CD4-positive, alpha-beta T cell (primary cell): ENCODE measurements at regions of chr19 and their contacts with region 1.

Region 1: GRCh38 chr19:53365134-53365898 is at the start of gene ZNF525:
- DNase-seq: peak; percentile 95 to 99 (median 97)
- ATAC-seq: peak; percentile 99
- H3K4me3 ChIP-seq: peak within 1 kb of the TSS; percentile 74
- H3K4me3 Mint-ChIP-seq: peak within 1 kb of the TSS; percentile 96
- H3K27ac ChIP-seq: peak within 1 kb of the TSS; percentile 74 to 77
- H3K27ac Mint-ChIP-seq: peak within 1 kb of the TSS; percentile 91
- H3K4me1 ChIP-seq: peaks cover 19% of the 10 kb centered on the region
- H3K4me1 Mint-ChIP-seq: peaks cover 32% of the 10 kb centered on the region
- H3K27me3 ChIP-seq: no peaks in the 10 kb centered on the region
- H3K27me3 Mint-ChIP-seq: no peaks in the 10 kb centered on the region
- CTCF ChIP-seq: peak; percentile 55
- total RNA-seq, gene ZNF525: 13.5 to 16.3 TPM

Region 2: GRCh38 chr19:53158119-53158656 is 207.1 kb before region 1 on chr19:
- CTCF ChIA-PET with region 1: no interaction called
- POLR2A ChIA-PET with region 1: no interaction called
- intact Hi-C with region 1: loop called in 1 of 2 experiments (anchors 2 kb)
- DNase-seq: peak in 13 of 14 experiments; percentile 1 to 66 (median 9)
- ATAC-seq: peak; percentile 33
- H3K4me3 ChIP-seq: peak overlapping the region; percentile 71
- H3K4me3 Mint-ChIP-seq: peak overlapping the region; percentile 92
- H3K27ac ChIP-seq: peak overlapping the region; percentile 44 to 56
- H3K27ac Mint-ChIP-seq: peak overlapping the region; percentile 82
- H3K4me1 ChIP-seq: peaks cover 19% of the 10 kb centered on the region
- H3K4me1 Mint-ChIP-seq: peaks cover 26% of the 10 kb centered on the region
- H3K27me3 ChIP-seq: peaks cover 0 to 3% of the 10 kb centered on the region in 2 experiments
- H3K27me3 Mint-ChIP-seq: no peaks in the 10 kb centered on the region
- CTCF ChIP-seq: no peak

Region 3: GRCh38 chr19:53254411-53255341 is 110.6 kb before region 1 on chr19 and contains the start of gene ZNF677:
- CTCF ChIA-PET with region 1: no interaction called
- POLR2A ChIA-PET with region 1: no interaction called
- intact Hi-C with region 1: loop called in 1 of 2 experiments (anchors 10 kb)
- DNase-seq: peak; percentile 60 to 90 (median 78)
- ATAC-seq: peak; percentile 98
- H3K4me3 ChIP-seq: peak within 1 kb of the TSS; percentile 85
- H3K4me3 Mint-ChIP-seq: peak within 1 kb of the TSS; percentile 83
- H3K27ac ChIP-seq: peak within 1 kb of the TSS in 1 of 2 donors; percentile 29
- H3K27ac Mint-ChIP-seq: peak within 1 kb of the TSS; percentile 4
- H3K4me1 ChIP-seq: peaks cover 12% of the 10 kb centered on the region
- H3K4me1 Mint-ChIP-seq: peaks cover 7% of the 10 kb centered on the region
- H3K27me3 ChIP-seq: no peaks in the 10 kb centered on the region
- H3K27me3 Mint-ChIP-seq: peaks cover 3% of the 10 kb centered on the region
- CTCF ChIP-seq: no peak
- total RNA-seq, gene ZNF677: 5.2 to 6.4 TPM

Region 4: GRCh38 chr19:53333463-53334449 is 31.6 kb before region 1 on chr19 and contains the start of gene ZNF845:
- CTCF ChIA-PET with region 1: no interaction called
- POLR2A ChIA-PET with region 1: interaction called, 5 read pairs
- intact Hi-C with region 1: loop called (anchors 1 to 5 kb)
- DNase-seq: peak; percentile 91 to 99 (median 95)
- ATAC-seq: peak; percentile 97
- H3K4me3 ChIP-seq: peak within 1 kb of the TSS; percentile 82
- H3K4me3 Mint-ChIP-seq: peak within 1 kb of the TSS; percentile 95
- H3K27ac ChIP-seq: peak within 1 kb of the TSS in 1 of 2 donors; percentile 72
- H3K27ac Mint-ChIP-seq: peak within 1 kb of the TSS; percentile 84
- H3K4me1 ChIP-seq: peaks cover 17% of the 10 kb centered on the region
- H3K4me1 Mint-ChIP-seq: peaks cover 22% of the 10 kb centered on the region
- H3K27me3 ChIP-seq: peaks cover 0 to 4% of the 10 kb centered on the region in 2 experiments
- H3K27me3 Mint-ChIP-seq: peaks cover 8% of the 10 kb centered on the region
- CTCF ChIP-seq: no peak
- total RNA-seq, gene ZNF845: 7.5 to 8.0 TPM

Region 5: DNA sequence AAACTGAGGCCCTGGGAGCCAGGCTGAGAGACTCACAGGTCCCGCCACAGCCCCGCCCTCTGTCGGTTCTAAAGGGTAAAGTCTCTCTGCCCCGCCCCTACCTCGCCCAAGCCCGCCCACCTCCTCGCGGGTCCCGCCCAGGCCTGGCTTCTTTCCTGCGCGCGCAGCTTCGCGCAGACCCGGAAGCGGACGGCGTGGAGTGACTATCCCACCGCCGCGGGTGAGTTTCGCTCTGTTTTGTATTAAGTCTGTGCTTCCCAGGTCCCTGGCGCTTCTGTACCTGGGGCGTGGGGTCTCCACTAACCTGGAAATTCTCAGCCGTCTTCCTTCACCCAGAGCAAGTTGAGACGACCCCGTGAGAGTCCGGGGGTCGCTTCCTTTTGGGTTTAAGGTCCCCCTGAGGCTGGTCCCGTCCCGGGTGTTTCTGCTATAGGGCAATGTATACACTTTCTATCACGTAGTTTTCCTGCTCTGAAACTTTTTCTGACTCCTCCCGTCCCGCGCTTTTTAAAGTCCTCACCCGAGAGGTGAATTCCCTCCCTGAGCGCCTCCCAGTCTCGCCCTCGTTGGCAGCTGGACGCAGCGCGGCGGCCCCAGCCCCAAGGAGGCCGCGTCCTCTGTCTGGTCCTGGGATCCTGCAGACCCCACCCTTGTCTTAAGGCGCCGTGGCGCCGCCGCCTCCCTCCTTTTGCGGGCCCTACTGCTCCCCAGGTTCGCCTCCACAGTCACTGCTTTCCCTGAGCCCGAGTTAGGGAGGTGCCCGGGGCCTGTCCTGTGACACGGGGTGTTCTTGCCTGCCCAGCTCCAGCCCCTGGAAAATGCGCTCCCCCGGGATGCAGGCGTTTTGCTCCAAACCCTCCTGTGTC is 29.9 kb after region 1 on chr19 and contains the start of gene ZNF765:
- CTCF ChIA-PET with region 1: no interaction called
- POLR2A ChIA-PET with region 1: interaction called, 3 read pairs
- intact Hi-C with region 1: loop called (anchors 1 to 2 kb)
- DNase-seq: peak; percentile 93 to 99 (median 96)
- ATAC-seq: peak; percentile 97
- H3K4me3 ChIP-seq: peak within 1 kb of the TSS; percentile 77
- H3K4me3 Mint-ChIP-seq: peak within 1 kb of the TSS; percentile 93
- H3K27ac ChIP-seq: peak within 1 kb of the TSS; percentile 35 to 65
- H3K27ac Mint-ChIP-seq: peak within 1 kb of the TSS; percentile 93
- H3K4me1 ChIP-seq: peaks cover 13% of the 10 kb centered on the region
- H3K4me1 Mint-ChIP-seq: peaks cover 33% of the 10 kb centered on the region
- H3K27me3 ChIP-seq: no peaks in the 10 kb centered on the region
- H3K27me3 Mint-ChIP-seq: no peaks in the 10 kb centered on the region
- CTCF ChIP-seq: peak; percentile 56
- total RNA-seq, gene ZNF765: 6.7 to 9.0 TPM

Region 6: GRCh38 chr19:53467485-53468262 is 102.4 kb after region 1 on chr19 and contains the start of gene ZNF813:
- CTCF ChIA-PET with region 1: no interaction called
- POLR2A ChIA-PET with region 1: no interaction called
- intact Hi-C with region 1: loop called in 1 of 2 experiments (anchors 1 kb)
- DNase-seq: peak; percentile 93 to 99 (median 96)
- ATAC-seq: peak; percentile 97
- H3K4me3 ChIP-seq: peak within 1 kb of the TSS; percentile 74
- H3K4me3 Mint-ChIP-seq: peak within 1 kb of the TSS; percentile 96
- H3K27ac ChIP-seq: peak within 1 kb of the TSS; percentile 21 to 60
- H3K27ac Mint-ChIP-seq: peak within 1 kb of the TSS; percentile 89
- H3K4me1 ChIP-seq: peaks cover 15% of the 10 kb centered on the region
- H3K4me1 Mint-ChIP-seq: peaks cover 35% of the 10 kb centered on the region
- H3K27me3 ChIP-seq: peaks cover 0 to 5% of the 10 kb centered on the region in 2 experiments
- H3K27me3 Mint-ChIP-seq: peaks cover 12% of the 10 kb centered on the region
- CTCF ChIP-seq: no peak
- total RNA-seq, gene ZNF813: 2.0 to 2.7 TPM

Region 7: DNA sequence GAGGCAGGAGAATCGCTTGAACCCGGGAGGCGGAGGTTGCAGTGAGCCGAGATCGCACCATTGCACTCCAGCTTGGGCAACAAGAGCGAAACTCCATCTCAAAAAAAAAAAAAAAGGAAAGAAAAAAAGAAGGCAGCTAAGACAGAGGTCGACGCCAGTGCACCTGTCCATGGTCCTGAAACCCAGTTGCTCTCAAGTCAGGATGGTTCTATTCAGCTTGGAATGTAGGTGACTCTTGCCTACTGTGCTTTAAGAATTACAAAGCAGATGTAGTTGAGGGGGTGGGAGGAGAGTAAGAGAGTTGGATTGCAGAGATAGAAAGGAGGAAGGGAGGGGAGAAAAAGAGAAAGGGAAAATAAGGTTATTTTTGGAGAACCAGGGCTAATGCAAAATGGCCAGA is 562.4 kb after region 1 on chr19:
- CTCF ChIA-PET with region 1: no interaction called
- POLR2A ChIA-PET with region 1: no interaction called
- intact Hi-C with region 1: no loop called
- DNase-seq: peak in 10 of 14 experiments; percentile 17 to 69 (median 31)
- ATAC-seq: no peak
- H3K4me3 ChIP-seq: no peak overlapping the region
- H3K4me3 Mint-ChIP-seq: no peak overlapping the region
- H3K27ac ChIP-seq: no peak overlapping the region
- H3K27ac Mint-ChIP-seq: no peak overlapping the region
- H3K4me1 ChIP-seq: no peaks in the 10 kb centered on the region
- H3K4me1 Mint-ChIP-seq: no peaks in the 10 kb centered on the region
- H3K27me3 ChIP-seq: no peaks in the 10 kb centered on the region
- H3K27me3 Mint-ChIP-seq: peaks cover 21% of the 10 kb centered on the region
- CTCF ChIP-seq: no peak